ENCODE measurements at regions of chr11 and their contacts with region 1.

Region 1: GRCh38 chr11:66222358-66223149 is 45.9 kb upstream of the RAB1B start:
- DNase-seq: peak; percentile 80 to 98 (median 90)

Region 2: DNA sequence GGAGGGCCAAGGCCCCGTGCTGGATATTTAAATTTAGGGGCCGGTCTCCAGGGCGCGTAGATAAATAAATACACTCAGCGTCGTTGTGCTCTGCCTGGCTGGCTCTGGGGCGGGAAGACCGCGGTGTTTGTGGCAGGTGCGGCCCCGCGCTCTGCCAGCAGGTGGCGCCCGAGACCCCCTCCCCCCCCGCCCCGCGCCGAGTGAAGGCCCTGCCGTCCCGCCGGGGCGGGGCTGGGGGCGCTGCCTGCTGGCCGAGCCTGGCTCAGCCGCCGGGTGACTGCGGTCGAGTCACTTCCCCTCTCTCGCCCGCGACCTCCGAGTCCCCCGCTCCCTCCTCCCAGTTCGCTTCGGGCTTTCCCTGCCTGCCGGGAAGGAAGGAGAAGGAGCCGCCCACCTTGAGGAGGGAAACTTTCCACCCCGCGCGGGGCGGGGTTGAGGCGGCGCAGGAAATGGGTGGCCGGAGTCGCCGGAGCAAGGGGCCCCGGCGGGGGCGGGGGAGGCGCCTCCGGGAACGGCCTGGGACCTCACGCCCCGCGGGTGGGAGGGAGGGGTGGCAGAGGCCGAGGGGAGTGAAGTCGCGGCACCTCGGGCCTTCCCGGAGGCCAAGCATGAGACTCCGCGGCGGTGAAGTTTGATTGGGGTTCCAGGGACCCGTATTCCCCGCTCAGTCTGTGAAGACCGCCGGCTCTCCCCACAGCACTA is 648.3 kb before region 1 on chr11:
- intact Hi-C with region 1: no loop called
- DNase-seq: peak in 9 of 10 donors; percentile 57 to 94 (median 67)

Region 3: DNA sequence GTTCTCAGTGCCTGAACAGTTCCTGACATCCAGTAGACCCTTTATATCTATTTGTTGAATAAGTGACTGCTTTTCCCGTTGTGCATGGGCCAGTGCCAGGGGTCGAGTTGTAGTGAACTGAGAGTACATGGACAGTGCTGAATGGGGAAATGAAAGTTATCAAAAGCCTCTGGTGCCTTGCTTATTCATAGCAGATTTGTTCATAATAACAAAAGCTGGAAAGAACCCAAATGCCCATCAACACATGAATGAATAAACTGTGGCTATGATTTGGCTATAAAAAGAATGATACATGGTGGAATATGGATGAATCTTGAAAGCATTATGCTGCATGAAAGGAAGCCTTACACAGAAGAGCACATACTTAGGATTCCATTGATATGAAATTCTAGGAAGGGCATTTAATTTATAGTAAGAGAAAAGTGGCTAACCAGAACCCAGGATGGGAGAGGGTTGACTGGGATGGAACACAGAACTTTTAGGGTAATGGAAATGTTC is 109.9 kb before region 1 on chr11:
- intact Hi-C with region 1: no loop called
- DNase-seq: no peak

Region 4: GRCh38 chr11:66142370-66143263 is 79.9 kb before region 1 on chr11:
- intact Hi-C with region 1: no loop called
- DNase-seq: no peak

Region 5: DNA sequence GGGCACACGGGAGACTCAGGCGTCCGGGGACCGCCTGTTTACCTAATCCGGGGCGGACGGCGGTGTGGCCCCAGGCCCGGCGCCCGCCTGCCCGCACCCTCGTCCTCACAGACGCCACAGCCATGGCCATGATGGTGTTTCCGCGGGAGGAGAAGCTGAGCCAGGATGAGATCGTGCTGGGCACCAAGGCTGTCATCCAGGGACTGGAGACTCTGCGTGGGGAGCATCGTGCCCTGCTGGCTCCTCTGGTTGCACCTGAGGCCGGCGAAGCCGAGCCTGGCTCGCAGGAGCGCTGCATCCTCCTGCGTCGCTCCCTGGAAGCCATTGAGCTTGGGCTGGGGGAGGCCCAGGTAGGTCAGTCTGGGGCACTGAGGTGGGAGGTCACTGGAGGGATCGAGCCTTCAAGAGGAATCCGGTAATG is 35.9 kb after region 1 on chr11:
- intact Hi-C with region 1: loop called (anchors 1 kb)
- DNase-seq: no peak

Region 6: GRCh38 chr11:66282468-66283386 is 60.2 kb after region 1 on chr11:
- intact Hi-C with region 1: loop called (anchors 2 kb)
- DNase-seq: peak; percentile 98 to 100 (median 100)

Region 7: GRCh38 chr11:66336234-66337102 is 113.9 kb after region 1 on chr11 and contains the start of gene RIN1:
- intact Hi-C with region 1: no loop called
- DNase-seq: peak in 8 of 10 donors; percentile 66 to 97 (median 79)

Measured in posterior cingulate gyrus (tissue), 11 donors.